ENCODE measurements at regions of chr1 and their contacts with region 1.

Region 1: GRCh38 chr1:151327223-151327902 is at the start of gene PI4KB:
- DNase-seq: peak; percentile 96

Region 2: DNA sequence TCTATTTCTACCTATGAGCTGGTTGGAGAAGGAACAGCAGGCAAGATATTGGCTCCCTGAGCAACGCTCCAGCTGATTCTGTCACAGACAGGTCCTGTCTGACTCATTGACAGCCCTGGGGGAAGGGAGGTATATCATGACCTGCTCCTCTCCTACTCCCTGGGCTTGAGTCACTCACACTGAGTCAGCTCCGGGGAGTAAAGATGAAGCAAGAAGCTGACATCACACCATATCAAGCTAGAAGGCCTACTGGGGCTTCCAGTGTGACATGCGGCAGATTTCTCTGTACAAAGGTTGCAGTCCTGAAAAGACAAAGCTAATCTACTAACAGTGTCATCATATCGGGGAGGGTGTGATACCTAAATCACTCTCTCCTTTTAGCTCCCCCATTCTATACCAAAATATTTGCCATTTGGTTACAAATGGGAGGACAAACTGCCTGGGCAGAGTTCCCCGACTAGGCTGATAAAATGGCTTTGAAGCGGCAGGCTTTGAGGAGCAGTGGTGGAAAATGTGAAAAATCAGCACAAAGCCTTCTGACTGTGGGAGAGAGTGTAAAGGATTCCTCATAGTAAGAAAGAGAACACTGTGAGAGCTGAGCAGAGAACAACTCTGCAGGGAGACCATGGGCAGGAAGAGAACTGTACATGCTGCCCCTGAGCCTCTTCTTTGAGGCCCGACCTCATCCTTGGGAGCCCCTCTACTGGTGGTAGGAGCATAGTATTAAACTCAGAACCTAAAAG is 15.6 kb before region 1 on chr1:
- CTCF ChIA-PET with region 1: interaction called, 9 read pairs
- POLR2A ChIA-PET with region 1: interaction called, 89 read pairs
- DNase-seq: peak; percentile 48

Region 3: DNA sequence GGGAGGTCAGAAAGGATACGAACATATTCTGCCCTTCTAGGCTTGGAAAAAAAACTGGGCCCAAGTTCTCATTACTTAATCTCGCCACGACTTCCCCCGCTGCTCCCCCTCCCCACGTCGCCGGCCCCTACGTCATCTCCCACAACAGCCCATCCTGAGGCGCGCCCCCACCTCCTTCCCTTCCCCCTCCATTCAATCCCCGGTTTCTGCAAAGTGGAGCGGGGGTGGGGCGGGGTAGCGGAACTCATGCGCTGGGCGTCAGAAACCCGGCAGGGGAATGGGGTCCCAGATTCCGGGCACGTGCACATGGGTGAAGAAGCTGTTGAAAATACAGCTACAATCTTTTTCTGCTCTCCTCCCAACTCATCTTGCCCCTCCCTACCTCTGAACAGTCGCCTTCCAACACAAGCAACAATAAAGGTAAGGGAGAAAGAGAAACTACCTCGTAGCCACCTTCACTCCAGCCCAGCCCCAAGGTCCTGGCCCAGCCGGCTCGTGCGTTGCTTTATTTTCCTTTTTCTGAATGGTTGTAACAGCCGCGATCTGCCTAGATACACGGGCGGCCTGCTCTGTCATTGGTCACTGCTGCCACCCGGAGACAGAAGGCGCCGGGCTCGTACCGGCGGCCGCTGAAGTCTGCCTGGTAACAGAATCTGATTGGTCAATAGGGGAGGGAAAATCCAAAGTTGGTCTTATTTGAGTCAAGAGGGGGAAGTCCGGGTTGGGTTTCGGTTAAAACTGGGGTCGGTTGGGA is 19.6 kb after region 1 on chr1 and contains the start of gene RFX5:
- CTCF ChIA-PET with region 1: no interaction called
- POLR2A ChIA-PET with region 1: interaction called, 11 read pairs
- DNase-seq: peak; percentile 99

Region 4: DNA sequence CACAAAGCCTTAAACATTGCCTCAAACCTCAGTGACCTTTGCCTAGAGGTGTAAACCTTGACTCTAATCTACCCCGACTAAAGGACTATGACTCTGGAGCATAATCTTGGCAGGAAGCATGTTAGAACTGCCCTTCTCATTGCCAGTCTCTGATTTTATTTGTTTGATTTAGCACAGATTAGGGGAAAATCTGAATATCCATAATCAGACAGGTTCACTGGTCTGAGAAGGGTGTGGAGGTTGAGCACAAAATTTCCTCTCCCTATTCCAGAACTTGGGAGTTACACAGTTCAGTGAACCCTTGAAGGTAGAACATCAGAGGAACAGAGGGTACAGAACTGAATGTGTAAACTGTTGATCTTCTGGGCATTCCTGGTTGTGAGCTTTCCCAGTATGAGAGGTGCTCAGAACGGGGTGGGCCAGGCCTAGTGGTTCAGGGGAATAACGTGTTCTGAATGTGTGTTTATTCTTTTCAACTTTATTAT is 63.8 kb after region 1 on chr1:
- CTCF ChIA-PET with region 1: no interaction called
- POLR2A ChIA-PET with region 1: no interaction called
- DNase-seq: no peak

Region 5: DNA sequence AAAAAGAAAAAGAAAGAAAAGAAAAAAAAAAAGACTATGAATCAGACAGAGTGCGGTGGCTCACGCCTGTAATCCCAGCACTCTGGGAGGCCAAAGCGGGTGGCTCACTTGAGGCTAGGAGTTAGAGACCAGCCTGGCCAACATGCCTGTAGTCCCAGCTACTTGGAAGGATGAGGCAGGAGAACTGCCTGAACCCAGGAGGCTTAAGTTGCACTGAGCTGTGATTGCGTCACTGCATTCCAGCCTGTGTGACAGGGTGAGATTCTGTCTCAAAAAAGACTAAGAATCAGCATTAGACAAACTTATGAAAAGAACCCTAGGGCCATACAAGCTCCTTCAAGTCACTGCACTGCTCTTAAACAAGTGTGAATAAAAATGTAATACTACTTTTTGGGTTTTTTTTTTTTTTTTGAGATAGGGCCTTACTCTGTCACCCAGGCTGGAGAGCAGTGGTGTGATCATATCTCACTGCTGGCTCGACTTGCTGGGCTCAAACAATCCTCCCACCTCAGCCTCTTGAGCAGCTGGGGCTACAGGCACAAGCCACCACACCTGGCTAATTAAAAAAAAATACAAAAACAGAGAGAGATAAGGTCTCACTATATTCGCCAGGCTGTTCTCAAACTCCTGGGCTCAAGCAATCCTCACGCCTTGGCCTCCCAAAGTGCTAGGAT is 89.0 kb after region 1 on chr1:
- CTCF ChIA-PET with region 1: no interaction called
- POLR2A ChIA-PET with region 1: no interaction called
- DNase-seq: no peak